ENCODE measurements at regions of chr2 and their contacts with region 1.

Region 1: GRCh38 chr2:104849618-104850141 is 4.2 kb upstream of the POU3F3 start:
- DNase-seq: no peak
- H3K27ac ChIP-seq: no peak overlapping the region
- CTCF ChIP-seq: peak; percentile 82

Region 2: GRCh38 chr2:104862058-104862941 is 12.6 kb after region 1 on chr2:
- CTCF ChIA-PET with region 1: interaction called, 15 read pairs
- POLR2A ChIA-PET with region 1: no interaction called
- DNase-seq: no peak
- H3K27ac ChIP-seq: no peak overlapping the region
- CTCF ChIP-seq: no peak